Transverse colon (tissue), 4 donors: ENCODE measurements at regions of chr16 and their contacts with region 1.

Region 1: DNA sequence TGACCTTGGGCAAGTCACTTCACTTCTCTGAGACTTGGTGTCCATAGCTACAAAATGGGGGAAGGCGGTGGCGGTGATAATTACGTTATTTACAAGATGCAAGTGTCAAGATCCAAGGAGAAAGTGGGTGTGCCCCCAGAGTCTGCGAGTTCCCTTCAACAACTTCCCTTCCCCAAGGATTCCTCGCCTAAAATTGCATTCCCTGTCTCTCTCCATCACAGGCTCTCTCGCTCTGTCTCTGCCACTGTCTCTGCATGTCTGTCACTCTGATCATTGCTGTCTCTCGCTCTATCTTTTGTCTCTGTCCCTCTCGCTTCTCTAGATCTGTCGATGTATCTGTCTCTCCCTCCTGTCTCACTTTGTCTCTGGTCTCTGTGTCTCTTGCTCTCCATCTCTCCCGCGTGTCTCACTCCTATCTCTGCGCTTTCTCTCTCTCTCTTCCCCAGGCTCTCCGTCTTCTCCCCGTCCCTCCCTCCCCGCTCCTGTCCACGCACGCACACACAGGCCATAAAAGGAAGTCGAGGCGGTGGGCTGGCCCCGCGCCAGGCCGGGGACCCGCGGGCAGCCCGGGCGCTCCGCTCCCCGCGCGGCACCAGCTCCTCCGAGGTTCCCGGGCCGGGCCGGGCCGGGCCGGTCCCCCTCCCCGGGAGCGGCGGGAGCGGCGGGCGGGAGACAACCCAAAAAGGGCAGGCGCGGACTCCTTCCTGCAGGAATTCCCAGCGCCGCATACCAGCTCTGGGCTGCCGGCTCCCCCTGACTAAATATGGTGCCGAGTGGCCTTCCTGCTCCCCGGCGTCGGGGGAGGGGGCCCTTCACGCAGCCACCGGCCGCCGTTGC is 1.1 kb upstream of the MYH11 start:
- DNase-seq: peak; percentile 49
- H3K4me3 ChIP-seq: peak overlapping the region; percentile 32 to 50 (median 38)
- H3K27ac ChIP-seq: peak overlapping the region; percentile 76 to 92 (median 83)
- H3K4me1 ChIP-seq: peaks cover 0 to 21% (median 2%) of the 10 kb centered on the region in 4 donors
- H3K27me3 ChIP-seq: peaks cover 40% of the 10 kb centered on the region
- CTCF ChIP-seq: no peak
- EP300 ChIP-seq: no peak
- POLR2A ChIP-seq: peak; percentile 18

Region 2: DNA sequence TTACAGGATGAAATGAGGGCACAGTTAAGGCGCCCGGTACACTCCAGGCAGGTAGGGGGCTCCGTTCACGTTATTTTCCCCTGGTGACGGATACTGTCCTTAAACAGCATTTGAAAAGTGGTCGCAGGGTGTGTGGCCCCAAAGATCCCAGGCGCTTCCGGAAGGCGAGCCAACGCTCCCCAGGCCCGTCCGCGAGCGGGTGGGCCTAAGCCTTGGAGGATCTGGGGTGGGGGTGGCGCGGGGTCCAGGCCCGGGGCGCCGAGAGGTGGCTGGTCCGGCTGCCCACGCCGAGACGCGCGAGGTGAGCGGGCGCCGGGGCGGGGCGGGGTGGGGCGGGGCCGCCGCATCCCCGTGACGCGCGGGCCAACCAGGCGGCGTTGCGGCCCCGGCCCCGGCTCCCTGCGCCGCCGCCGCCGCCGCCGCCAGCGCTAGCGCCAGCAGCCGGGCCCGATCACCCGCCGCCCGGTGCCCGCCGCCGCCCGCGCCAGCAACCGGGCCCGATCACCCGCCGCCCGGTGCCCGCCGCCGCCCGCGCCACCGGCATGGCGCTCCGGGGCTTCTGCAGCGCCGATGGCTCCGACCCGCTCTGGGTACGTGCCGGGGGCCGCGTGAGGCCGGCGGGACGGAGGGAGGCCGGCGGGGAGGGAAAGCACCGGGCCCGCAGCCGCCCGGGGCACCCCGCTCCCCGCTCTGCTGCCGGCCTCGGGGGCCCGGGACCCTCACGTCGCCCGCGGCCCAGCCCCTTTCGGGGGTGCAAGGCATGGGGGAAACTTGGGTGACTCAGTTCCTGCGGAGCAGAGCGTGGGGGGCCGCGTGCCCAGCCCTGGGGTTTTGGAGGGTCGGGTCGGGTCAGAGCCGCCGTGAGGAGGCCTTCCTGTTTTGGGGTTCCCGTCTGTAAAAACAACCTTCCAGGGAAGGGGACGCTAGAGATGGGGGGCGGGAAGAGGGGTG is 91.5 kb after region 1 on chr16 and contains the start of gene ABCC1:
- in situ Hi-C with region 1: no loop called
- intact Hi-C with region 1: loop called (anchors 10 kb)
- DNase-seq: peak; percentile 57
- H3K4me3 ChIP-seq: peak within 1 kb of the TSS; percentile 73 to 95 (median 84)
- H3K27ac ChIP-seq: peak within 1 kb of the TSS; percentile 84 to 94 (median 90)
- H3K4me1 ChIP-seq: peaks cover 0 to 53% (median 34%) of the 10 kb centered on the region in 4 donors
- H3K27me3 ChIP-seq: no peaks in the 10 kb centered on the region
- CTCF ChIP-seq: no peak
- EP300 ChIP-seq: no peak
- POLR2A ChIP-seq: no peak
- total RNA-seq, gene ABCC1: 17.1 to 67.3 (median 36.9) TPM